AG04449 (cell line): ENCODE measurements at regions of chr17 and their contacts with region 1.

Region 1: GRCh38 chr17:76005263-76006149 is 4.9 kb downstream of the CDK3 start:
- DNase-seq: no peak
- H3K4me3 ChIP-seq: no peak overlapping the region
- CTCF ChIP-seq: peak; percentile 40

Region 2: GRCh38 chr17:75979705-75980187 is 25.8 kb before region 1 on chr17:
- CTCF ChIA-PET with region 1: interaction called, 13 read pairs
- POLR2A ChIA-PET with region 1: no interaction called
- DNase-seq: no peak
- H3K4me3 ChIP-seq: peak overlapping the region; percentile 89
- CTCF ChIP-seq: no peak

Region 3: GRCh38 chr17:76261421-76262215 is 256.1 kb after region 1 on chr17:
- CTCF ChIA-PET with region 1: no interaction called
- POLR2A ChIA-PET with region 1: no interaction called
- DNase-seq: no peak
- H3K4me3 ChIP-seq: no peak overlapping the region
- CTCF ChIP-seq: no peak